Activated B cell treated with CpG ODN at 0.5 μM for 24 hours (primary cell): ENCODE measurements at regions of chr20 and their contacts with region 1.

Region 1: GRCh38 chr20:354298-355064 is 7.6 kb downstream of the NRSN2 start:
- DNase-seq: peak; percentile 70
- ATAC-seq: peak; percentile 100
- H3K4me3 Mint-ChIP-seq: no peak overlapping the region
- H3K27ac Mint-ChIP-seq: no peak overlapping the region
- H3K4me1 Mint-ChIP-seq: peaks cover 11% of the 10 kb centered on the region
- H3K27me3 Mint-ChIP-seq: no peaks in the 10 kb centered on the region
- CTCF ChIP-seq: no peak

Region 2: DNA sequence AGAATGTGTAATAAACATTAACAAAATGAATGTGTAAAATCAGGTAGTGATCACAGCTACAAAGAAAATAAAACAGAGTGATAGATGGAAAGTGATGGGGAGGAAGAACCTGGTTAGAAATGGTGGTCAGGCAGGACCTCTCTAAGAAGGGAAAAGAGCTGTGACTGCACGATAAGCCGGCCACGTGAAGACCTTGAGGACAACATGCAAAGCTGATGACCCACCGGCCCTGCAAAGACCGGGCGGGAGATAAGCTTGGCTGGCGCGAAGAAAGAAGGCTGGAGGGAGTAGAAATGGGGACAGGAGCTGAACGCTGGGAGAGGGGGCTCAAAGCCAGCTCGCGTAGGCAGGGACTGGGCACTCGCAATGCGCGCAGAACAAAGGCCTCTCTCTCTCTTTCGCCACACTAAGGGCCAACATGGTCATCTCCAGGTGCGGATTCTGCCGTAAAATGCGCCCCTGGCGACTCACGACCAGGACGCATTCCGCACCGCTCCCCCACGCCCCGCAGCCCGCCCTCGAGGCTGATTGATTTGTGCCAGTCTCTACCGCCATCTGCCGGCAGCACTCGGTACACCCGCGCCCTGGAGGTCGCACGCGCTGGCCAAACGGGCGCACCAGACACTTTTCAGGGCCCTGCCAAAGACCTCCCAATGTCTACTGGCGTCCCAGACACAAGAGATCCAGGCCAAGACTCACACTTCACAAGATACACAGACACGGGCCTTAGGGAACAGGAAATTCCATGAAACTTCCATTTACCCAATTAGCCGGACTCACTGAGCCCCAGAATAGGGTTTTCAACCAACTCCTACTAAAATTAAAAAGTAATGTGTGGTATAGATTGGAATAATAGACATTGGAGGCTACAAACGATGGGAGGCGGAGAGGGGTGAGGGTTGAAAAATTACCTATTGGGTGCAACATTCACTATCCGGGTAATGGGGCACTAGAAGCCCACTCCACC is 87.6 kb before region 1 on chr20:
- CTCF ChIA-PET with region 1: no interaction called
- POLR2A ChIA-PET with region 1: no interaction called
- intact Hi-C with region 1: no loop called
- DNase-seq: peak; percentile 86
- ATAC-seq: peak; percentile 99
- H3K4me3 Mint-ChIP-seq: peak overlapping the region; percentile 81
- H3K27ac Mint-ChIP-seq: no peak overlapping the region
- H3K4me1 Mint-ChIP-seq: peaks cover 9% of the 10 kb centered on the region
- H3K27me3 Mint-ChIP-seq: peaks cover 2% of the 10 kb centered on the region
- CTCF ChIP-seq: peak; percentile 50

Region 3: GRCh38 chr20:297098-297924 is 57.2 kb before region 1 on chr20 and contains the start of gene ZCCHC3:
- CTCF ChIA-PET with region 1: no interaction called
- POLR2A ChIA-PET with region 1: no interaction called
- intact Hi-C with region 1: no loop called
- DNase-seq: peak; percentile 82
- ATAC-seq: peak; percentile 88
- H3K4me3 Mint-ChIP-seq: peak within 1 kb of the TSS; percentile 98
- H3K27ac Mint-ChIP-seq: peak within 1 kb of the TSS; percentile 98
- H3K4me1 Mint-ChIP-seq: peaks cover 44% of the 10 kb centered on the region
- H3K27me3 Mint-ChIP-seq: no peaks in the 10 kb centered on the region
- CTCF ChIP-seq: no peak
- total RNA-seq, gene ZCCHC3: 25.9 and 28.1 TPM in 2 replicates

Region 4: GRCh38 chr20:407133-407952 is 52.9 kb after region 1 on chr20:
- CTCF ChIA-PET with region 1: no interaction called
- POLR2A ChIA-PET with region 1: interaction called, 5 read pairs
- intact Hi-C with region 1: loop called (anchors 1 kb)
- DNase-seq: no peak
- ATAC-seq: peak; percentile 70
- H3K4me3 Mint-ChIP-seq: peak overlapping the region; percentile 88
- H3K27ac Mint-ChIP-seq: peak overlapping the region; percentile 91
- H3K4me1 Mint-ChIP-seq: peaks cover 44% of the 10 kb centered on the region
- H3K27me3 Mint-ChIP-seq: no peaks in the 10 kb centered on the region
- CTCF ChIP-seq: no peak

Region 5: GRCh38 chr20:462199-462991 is 107.9 kb after region 1 on chr20 and contains the start of gene TBC1D20:
- CTCF ChIA-PET with region 1: no interaction called
- POLR2A ChIA-PET with region 1: no interaction called
- intact Hi-C with region 1: loop called (anchors 1 kb)
- DNase-seq: peak; percentile 91
- ATAC-seq: peak; percentile 96
- H3K4me3 Mint-ChIP-seq: peak within 1 kb of the TSS; percentile 93
- H3K27ac Mint-ChIP-seq: peak within 1 kb of the TSS; percentile 89
- H3K4me1 Mint-ChIP-seq: peaks cover 24% of the 10 kb centered on the region
- H3K27me3 Mint-ChIP-seq: peaks cover 2% of the 10 kb centered on the region
- CTCF ChIP-seq: no peak
- total RNA-seq, gene TBC1D20: 21.4 and 24.1 TPM in 2 replicates

Region 6: GRCh38 chr20:645318-646106 is 291.0 kb after region 1 on chr20:
- CTCF ChIA-PET with region 1: interaction called, 13 read pairs
- POLR2A ChIA-PET with region 1: no interaction called
- intact Hi-C with region 1: loop called (anchors 1 kb)
- DNase-seq: peak; percentile 70
- ATAC-seq: peak; percentile 90
- H3K4me3 Mint-ChIP-seq: no peak overlapping the region
- H3K27ac Mint-ChIP-seq: no peak overlapping the region
- H3K4me1 Mint-ChIP-seq: peaks cover 10% of the 10 kb centered on the region
- H3K27me3 Mint-ChIP-seq: peaks cover 19% of the 10 kb centered on the region
- CTCF ChIP-seq: peak; percentile 81

Region 7: DNA sequence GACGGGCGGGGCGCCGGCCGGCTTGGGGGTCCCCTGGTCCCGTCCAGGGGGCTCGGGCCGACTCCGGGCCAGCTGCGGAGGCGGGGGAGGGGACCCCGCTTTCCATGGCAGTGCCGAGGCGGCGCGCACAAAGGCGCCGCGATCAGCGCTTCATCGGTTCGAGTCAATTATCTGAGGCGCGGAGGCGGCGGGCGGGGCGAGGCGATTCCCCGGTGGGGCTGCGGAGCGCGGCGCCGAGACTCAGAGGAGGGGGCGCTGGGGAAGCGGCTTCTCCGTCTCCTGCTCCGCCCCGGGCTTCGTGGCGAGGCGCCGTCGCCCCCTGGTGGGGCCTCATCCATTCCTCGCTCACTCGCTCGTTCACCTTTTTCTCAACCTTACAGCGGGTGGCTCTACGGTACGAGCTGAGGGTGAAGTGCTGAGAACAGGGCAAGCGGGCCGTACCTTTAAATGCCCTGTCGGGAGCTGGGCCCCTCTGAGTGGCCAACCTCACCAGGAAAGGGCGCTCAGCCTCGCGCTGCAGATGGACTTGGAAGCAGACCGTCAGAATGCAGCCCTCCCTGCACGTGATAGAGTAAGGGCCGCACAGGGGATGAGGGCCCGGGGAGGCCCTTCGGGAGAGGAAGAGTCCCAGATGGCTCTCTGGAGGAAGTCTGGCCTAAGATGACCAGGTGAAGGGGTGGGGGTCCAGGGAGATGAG is 373.9 kb after region 1 on chr20:
- CTCF ChIA-PET with region 1: no interaction called
- POLR2A ChIA-PET with region 1: no interaction called
- intact Hi-C with region 1: loop called (anchors 2 kb)
- DNase-seq: peak; percentile 30
- ATAC-seq: peak; percentile 54
- H3K4me3 Mint-ChIP-seq: no peak overlapping the region
- H3K27ac Mint-ChIP-seq: no peak overlapping the region
- H3K4me1 Mint-ChIP-seq: peaks cover 4% of the 10 kb centered on the region
- H3K27me3 Mint-ChIP-seq: peaks cover 54% of the 10 kb centered on the region
- CTCF ChIP-seq: no peak